ENCODE measurements at regions of chr1 and their contacts with region 1.

Region 1: DNA sequence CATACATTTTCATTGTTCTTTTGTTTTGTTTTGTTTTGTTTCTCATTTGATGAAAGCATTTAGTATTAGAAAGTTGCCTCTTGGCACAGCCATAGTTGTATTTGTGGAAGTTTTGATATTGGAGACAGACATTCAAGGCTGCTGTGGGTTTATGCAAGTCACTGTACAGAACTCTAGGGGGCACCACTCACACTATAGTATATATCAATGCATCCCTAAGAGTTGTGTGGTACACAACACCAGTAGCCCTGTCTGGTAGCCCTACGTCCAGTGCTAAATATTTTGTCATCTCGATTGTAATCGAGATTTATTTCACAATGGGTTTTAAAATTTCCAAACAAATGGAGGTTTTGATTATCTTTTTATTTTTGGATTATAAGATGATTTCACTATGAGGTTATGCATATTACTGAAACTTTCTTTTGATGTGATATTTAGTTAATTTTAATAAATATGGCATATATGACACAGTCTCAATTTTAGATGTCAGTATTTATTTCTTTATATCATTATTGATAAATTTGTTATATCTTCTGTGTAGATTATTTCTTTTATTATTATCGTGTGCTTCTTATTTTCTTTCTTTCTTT is 112.2 kb downstream of the NR5A2 start:
- DNase-seq: peak; percentile 81
- H3K4me3 Mint-ChIP-seq: no peak overlapping the region
- H3K27ac Mint-ChIP-seq: no peak overlapping the region
- H3K4me1 Mint-ChIP-seq: no peaks in the 10 kb centered on the region
- H3K27me3 Mint-ChIP-seq: no peaks in the 10 kb centered on the region
- CTCF ChIP-seq: peak; percentile 83

Region 2: GRCh38 chr1:200128944-200129885 is 10.5 kb before region 1 on chr1:
- CTCF ChIA-PET with region 1: interaction called, 14 read pairs
- POLR2A ChIA-PET with region 1: no interaction called
- intact Hi-C with region 1: no loop called
- DNase-seq: no peak
- H3K4me3 Mint-ChIP-seq: no peak overlapping the region
- H3K27ac Mint-ChIP-seq: no peak overlapping the region
- H3K4me1 Mint-ChIP-seq: peaks cover 3% of the 10 kb centered on the region
- H3K27me3 Mint-ChIP-seq: no peaks in the 10 kb centered on the region
- CTCF ChIP-seq: no peak

Region 3: DNA sequence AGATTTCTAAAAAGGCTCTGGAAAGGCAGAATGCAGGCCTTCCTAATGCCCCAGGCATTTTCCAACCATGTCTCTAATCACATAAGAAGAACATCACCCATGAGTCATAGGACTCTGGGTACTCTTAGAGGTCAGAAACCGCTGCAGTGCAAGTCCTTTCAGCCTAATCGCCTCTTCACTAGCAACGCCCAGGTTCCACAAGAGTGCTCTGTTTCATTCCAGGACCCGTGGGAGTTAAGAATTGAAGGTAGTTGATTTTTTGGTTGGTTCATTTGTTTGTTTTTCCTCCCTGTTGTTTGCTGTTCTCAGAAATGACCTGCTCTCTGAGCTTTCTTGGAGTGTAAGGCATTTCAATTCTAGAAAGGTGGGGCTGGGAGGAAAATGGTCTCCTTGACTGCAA is 11.0 kb after region 1 on chr1:
- CTCF ChIA-PET with region 1: interaction called, 11 read pairs
- POLR2A ChIA-PET with region 1: interaction called, 3 read pairs
- intact Hi-C with region 1: no loop called
- DNase-seq: peak; percentile 90
- H3K4me3 Mint-ChIP-seq: no peak overlapping the region
- H3K27ac Mint-ChIP-seq: peak overlapping the region; percentile 10
- H3K4me1 Mint-ChIP-seq: peaks cover 19% of the 10 kb centered on the region
- H3K27me3 Mint-ChIP-seq: no peaks in the 10 kb centered on the region
- CTCF ChIP-seq: no peak

Region 4: GRCh38 chr1:200180821-200181220 is 41.1 kb after region 1 on chr1:
- CTCF ChIA-PET with region 1: interaction called, 10 read pairs
- POLR2A ChIA-PET with region 1: no interaction called
- intact Hi-C with region 1: no loop called
- DNase-seq: peak; percentile 95
- H3K4me3 Mint-ChIP-seq: no peak overlapping the region
- H3K27ac Mint-ChIP-seq: no peak overlapping the region
- H3K4me1 Mint-ChIP-seq: peaks cover 49% of the 10 kb centered on the region
- H3K27me3 Mint-ChIP-seq: no peaks in the 10 kb centered on the region
- CTCF ChIP-seq: peak; percentile 27

Region 5: DNA sequence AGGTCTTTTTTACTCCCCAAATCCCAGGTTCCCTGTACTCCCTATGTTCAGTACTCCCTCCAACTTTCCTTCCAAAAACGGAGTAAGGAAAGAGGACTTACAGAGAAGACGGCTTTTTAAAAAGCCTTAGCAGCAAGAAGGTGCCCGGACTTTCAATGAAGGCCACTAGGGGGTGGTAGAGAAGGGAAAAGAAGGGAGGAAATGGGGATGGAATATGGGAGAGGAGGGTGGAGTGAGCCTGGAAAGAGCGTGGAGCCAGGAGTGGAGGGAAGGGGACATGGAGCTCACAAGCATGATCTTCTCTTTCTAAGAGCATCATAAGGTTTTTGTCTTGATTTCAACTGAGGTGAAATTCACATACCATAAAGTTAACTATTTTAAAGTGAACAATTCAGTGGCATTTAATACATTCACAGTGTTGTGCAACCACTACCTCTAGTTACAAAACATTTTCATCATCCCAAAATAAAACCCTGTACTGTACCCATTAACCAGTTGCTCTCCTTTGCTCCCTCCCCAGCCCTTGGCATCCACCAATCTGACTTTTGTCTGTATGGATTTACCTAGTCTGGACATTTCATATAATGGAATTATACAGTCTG is 140.2 kb after region 1 on chr1:
- CTCF ChIA-PET with region 1: interaction called, 29 read pairs
- POLR2A ChIA-PET with region 1: no interaction called
- intact Hi-C with region 1: loop called (anchors 1 kb)
- DNase-seq: peak; percentile 89
- H3K4me3 Mint-ChIP-seq: no peak overlapping the region
- H3K27ac Mint-ChIP-seq: no peak overlapping the region
- H3K4me1 Mint-ChIP-seq: peaks cover 7% of the 10 kb centered on the region
- H3K27me3 Mint-ChIP-seq: no peaks in the 10 kb centered on the region
- CTCF ChIP-seq: peak; percentile 88

Region 6: GRCh38 chr1:200302192-200302920 is 162.6 kb after region 1 on chr1:
- CTCF ChIA-PET with region 1: interaction called, 18 read pairs
- POLR2A ChIA-PET with region 1: no interaction called
- intact Hi-C with region 1: loop called (anchors 1 kb)
- DNase-seq: peak; percentile 49
- H3K4me3 Mint-ChIP-seq: peak overlapping the region; percentile 73
- H3K27ac Mint-ChIP-seq: no peak overlapping the region
- H3K4me1 Mint-ChIP-seq: peaks cover 2% of the 10 kb centered on the region
- H3K27me3 Mint-ChIP-seq: no peaks in the 10 kb centered on the region
- CTCF ChIP-seq: no peak